ENCODE measurements at regions of chr1 and their contacts with region 1.

Region 1: DNA sequence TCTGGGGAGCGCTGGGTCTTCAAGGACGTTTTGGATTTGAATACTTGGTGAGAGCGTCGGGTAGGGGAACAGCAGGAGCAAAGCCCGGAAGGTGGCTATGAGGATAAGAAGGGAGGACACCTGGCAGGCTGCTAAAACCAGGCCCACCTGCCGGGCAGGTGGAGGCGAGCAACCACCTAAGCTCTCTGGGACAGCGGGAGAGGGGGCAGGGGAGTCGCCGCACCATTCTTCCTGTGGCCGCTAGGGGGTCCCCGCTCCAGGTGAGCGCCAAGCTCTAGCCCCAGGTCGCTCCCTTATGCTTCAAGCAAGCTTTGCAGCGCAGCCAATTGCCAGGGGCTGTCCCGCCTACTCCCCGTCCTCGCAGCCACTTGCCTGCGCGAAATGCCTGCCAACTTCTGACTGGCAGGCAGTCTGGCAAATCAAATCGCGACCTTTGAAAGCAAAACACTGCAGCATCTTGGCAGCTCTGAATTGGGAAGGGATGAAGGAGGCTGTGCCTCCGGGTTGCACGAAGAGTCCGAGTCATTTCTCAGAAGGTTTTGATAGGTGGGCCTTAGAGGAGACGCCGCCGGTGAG is at the start of gene NIPAL3:
- DNase-seq: peak; percentile 95 to 99 (median 98)
- H3K4me3 ChIP-seq: peak within 1 kb of the TSS; percentile 80 to 94
- H3K4me3 Mint-ChIP-seq: peak within 1 kb of the TSS; percentile 95 to 100 (median 98)
- H3K27ac ChIP-seq: peak within 1 kb of the TSS; percentile 67
- H3K27ac Mint-ChIP-seq: peak within 1 kb of the TSS; percentile 87 to 97 (median 95)
- H3K4me1 ChIP-seq: peaks cover 54% of the 10 kb centered on the region
- H3K4me1 Mint-ChIP-seq: peaks cover 37 to 76% (median 54%) of the 10 kb centered on the region in 4 donors
- H3K27me3 ChIP-seq: no peaks in the 10 kb centered on the region
- H3K27me3 Mint-ChIP-seq: no peaks in the 10 kb centered on the region
- total RNA-seq, gene NIPAL3: 52.8 to 53.2 TPM

Region 2: DNA sequence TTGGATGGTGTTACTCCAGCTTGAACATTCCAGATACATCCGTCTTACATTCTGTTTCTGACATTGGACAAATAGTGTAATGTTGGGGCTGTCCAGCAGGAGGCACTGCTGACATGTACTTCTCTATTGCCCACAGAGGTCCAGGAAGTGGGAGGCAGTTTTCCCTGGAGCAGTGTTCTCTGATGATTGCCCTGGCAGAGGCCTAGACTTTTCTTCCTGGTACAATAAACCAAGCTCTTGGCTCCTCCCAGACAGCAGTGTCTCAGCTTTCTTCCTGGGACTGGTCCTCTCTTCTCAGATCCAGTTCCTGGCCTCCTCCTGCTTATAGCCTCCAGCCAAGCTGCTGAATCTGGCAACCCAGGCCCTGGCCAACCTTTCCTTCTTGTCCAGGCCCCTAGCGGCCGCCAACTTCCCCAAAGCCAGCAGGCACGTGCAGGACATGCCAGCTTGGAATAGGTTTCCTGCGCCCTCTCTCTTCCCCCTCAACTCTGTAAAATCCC is 213.4 kb before region 1 on chr1:
- CTCF ChIA-PET with region 1: interaction called, 17 read pairs
- POLR2A ChIA-PET with region 1: interaction called, 3 read pairs
- intact Hi-C with region 1: no loop called
- DNase-seq: peak; percentile 32 to 53 (median 43)
- H3K4me3 ChIP-seq: no peak overlapping the region
- H3K4me3 Mint-ChIP-seq: no peak overlapping the region
- H3K27ac ChIP-seq: no peak overlapping the region
- H3K27ac Mint-ChIP-seq: peak overlapping the region in 3 of 7 donors; percentile 11 to 50 (median 36)
- H3K4me1 ChIP-seq: peaks cover 5% of the 10 kb centered on the region
- H3K4me1 Mint-ChIP-seq: peaks cover 3 to 13% (median 6%) of the 10 kb centered on the region in 4 donors
- H3K27me3 ChIP-seq: no peaks in the 10 kb centered on the region
- H3K27me3 Mint-ChIP-seq: no peaks in the 10 kb centered on the region

Region 3: DNA sequence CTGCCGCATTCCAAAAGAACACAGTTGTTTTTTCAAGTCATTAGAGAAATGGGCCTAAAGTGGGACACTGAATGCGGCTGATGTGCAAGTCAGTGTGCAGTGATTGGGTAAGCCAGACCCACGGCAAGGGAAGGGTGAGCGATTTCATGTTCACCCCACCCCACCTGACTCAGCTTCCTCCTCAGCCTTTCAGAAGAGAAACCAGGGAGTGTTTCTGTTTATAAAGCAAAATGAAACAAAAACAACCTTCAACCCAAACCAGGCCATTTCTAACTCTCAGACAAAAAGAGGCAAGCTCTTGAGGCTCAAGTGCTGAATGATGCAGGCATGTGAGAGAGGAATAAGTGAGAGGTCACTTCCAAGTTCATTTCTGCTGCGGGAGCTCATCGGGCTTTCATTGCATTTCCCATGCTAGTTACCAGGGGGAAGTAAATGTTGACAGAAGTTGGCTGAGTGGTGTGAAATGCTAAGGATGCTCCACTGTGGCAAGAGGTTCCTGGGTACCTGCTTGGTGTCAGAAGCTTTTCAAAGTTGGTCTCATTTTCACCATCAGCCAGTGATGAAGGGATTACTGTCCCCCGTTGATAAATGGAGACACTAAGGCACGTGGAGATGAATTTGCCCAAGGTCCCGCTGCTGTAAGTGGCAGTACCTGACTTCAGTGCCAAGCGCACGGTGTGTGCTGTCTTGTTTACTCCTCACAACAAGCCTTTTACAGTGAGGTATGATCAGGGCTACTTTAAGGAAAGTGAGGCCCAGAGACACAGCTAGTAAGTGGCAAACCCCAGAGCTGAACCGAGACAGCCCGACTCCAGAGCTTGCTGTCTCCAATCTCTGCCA is 31.0 kb before region 1 on chr1:
- CTCF ChIA-PET with region 1: no interaction called
- POLR2A ChIA-PET with region 1: no interaction called
- intact Hi-C with region 1: no loop called
- DNase-seq: peak in 1 of 5 donors; percentile 17
- H3K4me3 ChIP-seq: no peak overlapping the region
- H3K4me3 Mint-ChIP-seq: peak overlapping the region in 6 of 8 donors; percentile 23 to 69 (median 52)
- H3K27ac ChIP-seq: no peak overlapping the region
- H3K27ac Mint-ChIP-seq: peak overlapping the region in 5 of 7 donors; percentile 5 to 81 (median 75)
- H3K4me1 ChIP-seq: peaks cover 19% of the 10 kb centered on the region
- H3K4me1 Mint-ChIP-seq: peaks cover 13 to 23% (median 16%) of the 10 kb centered on the region in 4 donors
- H3K27me3 ChIP-seq: no peaks in the 10 kb centered on the region
- H3K27me3 Mint-ChIP-seq: no peaks in the 10 kb centered on the region

Region 4: GRCh38 chr1:24403806-24404205 is 11.6 kb before region 1 on chr1:
- CTCF ChIA-PET with region 1: interaction called, 18 read pairs
- POLR2A ChIA-PET with region 1: no interaction called
- intact Hi-C with region 1: no loop called
- DNase-seq: no peak
- H3K4me3 ChIP-seq: no peak overlapping the region
- H3K4me3 Mint-ChIP-seq: no peak overlapping the region
- H3K27ac ChIP-seq: no peak overlapping the region
- H3K27ac Mint-ChIP-seq: no peak overlapping the region
- H3K4me1 ChIP-seq: no peaks in the 10 kb centered on the region
- H3K4me1 Mint-ChIP-seq: no peaks in the 10 kb centered on the region
- H3K27me3 ChIP-seq: no peaks in the 10 kb centered on the region
- H3K27me3 Mint-ChIP-seq: no peaks in the 10 kb centered on the region

Region 5: DNA sequence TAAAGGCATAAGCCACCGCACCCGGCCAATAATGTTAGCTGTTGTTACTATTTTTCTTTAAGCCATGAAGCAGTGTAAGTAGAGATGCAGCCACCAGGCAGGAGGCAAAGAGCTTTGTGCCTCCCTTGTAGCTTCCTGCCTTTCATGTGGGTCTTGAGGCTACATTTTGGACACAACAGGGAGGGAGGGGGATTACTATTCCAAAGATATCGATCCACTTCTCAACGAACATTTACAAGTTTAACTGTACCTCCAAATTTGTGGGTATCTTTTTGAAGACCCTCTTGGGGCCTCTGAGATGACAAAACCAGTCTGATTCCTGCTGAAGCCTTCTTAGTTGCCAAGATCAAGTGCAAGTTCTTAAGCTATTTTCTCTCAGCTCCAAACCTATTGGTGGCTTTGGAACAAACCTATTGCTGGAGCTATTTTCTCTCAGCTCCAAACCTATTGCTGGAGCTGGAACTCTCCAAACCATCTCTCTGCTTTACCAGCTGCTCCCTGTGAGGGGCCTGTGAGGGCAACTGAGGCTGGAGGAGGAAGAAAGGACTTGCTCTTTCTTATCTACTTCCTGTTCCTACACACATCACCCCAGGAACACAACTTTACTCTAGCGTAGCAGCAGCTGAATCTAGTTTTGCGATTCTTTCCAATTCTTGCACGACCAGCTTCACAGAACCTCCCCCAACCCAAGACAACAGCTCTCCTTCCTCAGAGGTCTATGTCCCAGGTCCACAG is 71.1 kb after region 1 on chr1:
- CTCF ChIA-PET with region 1: interaction called, 44 read pairs
- POLR2A ChIA-PET with region 1: interaction called, 40 read pairs
- intact Hi-C with region 1: loop called (anchors 1 kb)
- DNase-seq: peak; percentile 72 to 79 (median 75)
- H3K4me3 ChIP-seq: peak overlapping the region in 1 of 2 donors; percentile 21
- H3K4me3 Mint-ChIP-seq: peak overlapping the region; percentile 66 to 88 (median 82)
- H3K27ac ChIP-seq: peak overlapping the region; percentile 58
- H3K27ac Mint-ChIP-seq: peak overlapping the region; percentile 92 to 98 (median 93)
- H3K4me1 ChIP-seq: peaks cover 82% of the 10 kb centered on the region
- H3K4me1 Mint-ChIP-seq: peaks cover 50 to 82% (median 63%) of the 10 kb centered on the region in 4 donors
- H3K27me3 ChIP-seq: no peaks in the 10 kb centered on the region
- H3K27me3 Mint-ChIP-seq: no peaks in the 10 kb centered on the region

Region 6: DNA sequence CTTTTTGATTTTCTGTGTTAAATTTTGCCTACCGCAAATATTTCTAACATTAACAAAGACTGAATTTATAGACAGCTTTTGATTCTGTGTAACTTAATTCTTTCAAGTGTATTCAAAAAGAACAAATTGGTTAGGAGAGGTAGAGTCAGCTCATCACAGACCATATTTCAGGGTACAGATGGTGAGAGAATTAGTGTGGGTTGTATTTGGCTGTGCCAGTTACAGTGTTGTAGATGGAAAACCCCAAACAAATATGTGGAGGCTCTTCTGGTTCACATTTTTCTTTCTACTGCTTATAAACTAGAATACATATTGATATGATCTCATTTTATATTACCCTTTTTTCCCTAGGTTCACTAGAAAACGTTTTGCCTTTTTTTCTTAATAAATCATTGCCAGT is 98.3 kb after region 1 on chr1:
- CTCF ChIA-PET with region 1: interaction called, 11 read pairs
- POLR2A ChIA-PET with region 1: interaction called, 164 read pairs
- intact Hi-C with region 1: no loop called
- DNase-seq: no peak
- H3K4me3 ChIP-seq: no peak overlapping the region
- H3K4me3 Mint-ChIP-seq: peak overlapping the region; percentile 7 to 65 (median 14)
- H3K27ac ChIP-seq: no peak overlapping the region
- H3K27ac Mint-ChIP-seq: peak overlapping the region; percentile 24 to 87 (median 44)
- H3K4me1 ChIP-seq: peaks cover 80% of the 10 kb centered on the region
- H3K4me1 Mint-ChIP-seq: peaks cover 56 to 88% (median 72%) of the 10 kb centered on the region in 4 donors
- H3K27me3 ChIP-seq: no peaks in the 10 kb centered on the region
- H3K27me3 Mint-ChIP-seq: no peaks in the 10 kb centered on the region

Region 7: DNA sequence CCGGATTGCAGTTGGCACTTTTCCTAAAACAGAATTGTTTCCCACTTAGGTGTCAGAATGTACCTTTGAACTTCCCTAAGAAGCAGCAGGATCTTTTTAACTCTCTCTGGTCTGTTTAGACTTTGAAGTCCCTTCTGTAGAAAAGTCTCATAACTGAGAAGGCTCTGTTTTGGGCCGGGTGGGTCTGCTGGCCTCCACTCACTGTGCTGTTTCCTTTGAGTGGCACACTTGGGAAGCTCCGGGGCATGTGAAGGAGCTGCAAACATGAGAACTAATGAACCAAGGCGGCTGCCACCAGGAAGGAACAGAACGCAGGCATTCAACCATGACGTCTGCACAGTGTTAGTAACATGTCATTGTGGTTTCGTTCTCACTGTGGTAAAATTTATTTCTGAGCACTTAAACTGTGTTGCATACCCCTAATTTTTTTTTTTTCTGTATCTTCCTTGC is 121.0 kb after region 1 on chr1:
- CTCF ChIA-PET with region 1: interaction called, 122 read pairs
- POLR2A ChIA-PET with region 1: interaction called, 22 read pairs
- intact Hi-C with region 1: loop called (anchors 2 kb)
- DNase-seq: peak; percentile 83 to 93 (median 86)
- H3K4me3 ChIP-seq: peak overlapping the region in 1 of 2 donors; percentile 32
- H3K4me3 Mint-ChIP-seq: peak overlapping the region; percentile 76 to 92 (median 88)
- H3K27ac ChIP-seq: peak overlapping the region; percentile 88
- H3K27ac Mint-ChIP-seq: peak overlapping the region; percentile 98 to 100 (median 100)
- H3K4me1 ChIP-seq: peaks cover 83% of the 10 kb centered on the region
- H3K4me1 Mint-ChIP-seq: peaks cover 57 to 82% (median 68%) of the 10 kb centered on the region in 4 donors
- H3K27me3 ChIP-seq: no peaks in the 10 kb centered on the region
- H3K27me3 Mint-ChIP-seq: no peaks in the 10 kb centered on the region

Region 8: GRCh38 chr1:24635195-24635843 is 219.9 kb after region 1 on chr1:
- CTCF ChIA-PET with region 1: interaction called, 11 read pairs
- POLR2A ChIA-PET with region 1: no interaction called
- intact Hi-C with region 1: loop called (anchors 1 kb)
- DNase-seq: peak in 4 of 5 donors; percentile 55 to 63 (median 57)
- H3K4me3 ChIP-seq: no peak overlapping the region
- H3K4me3 Mint-ChIP-seq: no peak overlapping the region
- H3K27ac ChIP-seq: no peak overlapping the region
- H3K27ac Mint-ChIP-seq: no peak overlapping the region
- H3K4me1 ChIP-seq: no peaks in the 10 kb centered on the region
- H3K4me1 Mint-ChIP-seq: peaks cover 2 to 11% (median 3%) of the 10 kb centered on the region in 4 donors
- H3K27me3 ChIP-seq: no peaks in the 10 kb centered on the region
- H3K27me3 Mint-ChIP-seq: peaks cover 2 to 5% of the 10 kb centered on the region in 2 donors